HepG2 (cell line): ENCODE measurements at regions of chr5 and their contacts with region 1.

Region 1: DNA sequence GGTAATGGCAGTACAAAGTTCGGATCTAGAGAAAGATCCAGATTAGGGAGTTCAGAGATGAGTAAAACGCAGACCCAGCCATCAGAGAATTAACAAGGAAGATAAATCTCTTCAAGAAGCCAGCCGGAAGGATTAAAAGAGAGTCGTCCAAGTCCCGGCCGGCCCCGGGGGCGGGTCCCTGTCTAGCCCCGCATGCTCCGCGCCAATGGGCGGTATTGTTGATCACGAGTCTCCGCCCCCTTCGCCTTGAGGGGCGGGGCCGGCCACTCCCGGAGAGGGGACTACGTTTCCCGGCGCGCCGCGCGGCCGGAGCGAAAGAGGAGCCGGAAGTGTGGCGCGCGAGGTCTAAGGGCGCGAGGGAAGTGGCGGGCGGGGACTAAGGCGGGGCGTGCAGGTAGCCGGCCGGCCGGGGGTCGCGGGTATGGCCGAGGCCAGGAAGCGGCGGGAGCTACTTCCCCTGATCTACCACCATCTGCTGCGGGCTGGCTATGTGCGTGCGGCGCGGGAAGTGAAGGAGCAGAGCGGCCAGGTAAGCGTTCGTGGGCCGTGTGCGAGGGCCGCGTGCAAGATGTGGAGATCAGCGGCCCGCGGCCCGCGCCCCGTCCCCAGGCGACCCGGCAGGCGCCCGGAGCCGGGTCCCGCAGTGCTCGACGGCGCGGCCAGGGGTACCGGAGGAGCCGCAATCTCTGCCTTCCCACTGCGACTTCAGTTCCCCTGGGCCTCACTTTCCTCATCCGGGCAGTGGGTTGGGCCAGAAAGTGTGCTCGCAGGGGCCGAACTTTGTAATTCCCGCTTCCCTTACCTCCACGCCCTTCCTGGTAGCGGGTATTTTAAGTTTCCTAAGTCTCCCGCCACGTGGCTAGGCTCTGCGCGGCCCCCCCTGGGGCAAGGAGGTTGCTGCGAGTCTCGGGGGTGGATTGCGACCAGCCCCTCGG is at the start of gene TCOF1:
- DNase-seq: peak; percentile 90
- ATAC-seq: peak; percentile 93
- H3K4me3 ChIP-seq: peak within 1 kb of the TSS; percentile 80 to 100 (median 84)
- H3K27ac ChIP-seq: peak within 1 kb of the TSS; percentile 72
- H3K4me1 ChIP-seq: peaks cover 74% of the 10 kb centered on the region
- H3K27me3 ChIP-seq: no peaks in the 10 kb centered on the region; a peak in 1 of 5 replicates
- CTCF ChIP-seq: no peak
- EP300 ChIP-seq: no peak
- POLR2A ChIP-seq: peak in 1 of 2 experiments; percentile 62; a peak in 3 of 4 replicates
- RAD21 ChIP-seq: peak; percentile 14; the same call in 1 of the 2 replicates
- total RNA-seq, gene TCOF1: 41.6 and 44.5 TPM in 2 replicates

Region 2: DNA sequence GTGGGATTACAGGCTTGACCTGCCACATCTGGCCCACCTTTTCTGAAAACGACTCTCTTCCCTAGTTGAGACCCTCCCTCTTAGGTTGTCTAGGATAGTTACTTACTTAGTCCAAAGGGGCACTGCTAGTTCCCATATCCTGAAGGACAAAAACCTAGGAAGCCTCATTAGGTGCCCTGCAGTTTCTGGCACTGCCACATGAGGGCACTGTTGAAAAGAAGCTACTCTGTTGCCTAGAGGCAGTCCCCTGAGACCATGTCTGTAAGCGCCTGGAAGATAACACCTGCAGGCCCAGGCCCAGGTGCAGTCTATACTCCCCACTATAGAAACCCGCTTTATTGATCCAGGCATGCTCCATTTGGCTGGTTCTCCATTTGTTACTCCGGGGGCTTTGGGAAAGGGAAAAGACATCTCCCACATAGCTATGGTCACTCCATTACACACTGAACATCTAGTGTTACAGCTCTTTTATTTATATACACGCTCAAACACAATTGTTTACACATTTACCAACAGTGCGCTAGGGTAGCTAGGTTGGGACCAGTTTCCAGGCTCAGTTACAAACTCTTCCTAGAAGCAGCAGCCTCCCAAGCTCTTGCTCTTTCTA is 700.9 kb before region 1 on chr5:
- CTCF ChIA-PET with region 1: no interaction called
- POLR2A ChIA-PET with region 1: no interaction called
- in situ Hi-C with region 1: no loop called
- intact Hi-C with region 1: loop called (anchors 10 kb)
- DNase-seq: no peak
- ATAC-seq: 0 out of 3 replicates have a peak, but pooled peaks have one; percentile 33
- H3K4me3 ChIP-seq: no peak overlapping the region
- H3K27ac ChIP-seq: no peak overlapping the region
- H3K4me1 ChIP-seq: no peaks in the 10 kb centered on the region
- H3K27me3 ChIP-seq: no peaks in the 10 kb centered on the region
- CTCF ChIP-seq: peak; percentile 68
- EP300 ChIP-seq: no peak
- POLR2A ChIP-seq: no peak
- RAD21 ChIP-seq: no peak

Region 3: DNA sequence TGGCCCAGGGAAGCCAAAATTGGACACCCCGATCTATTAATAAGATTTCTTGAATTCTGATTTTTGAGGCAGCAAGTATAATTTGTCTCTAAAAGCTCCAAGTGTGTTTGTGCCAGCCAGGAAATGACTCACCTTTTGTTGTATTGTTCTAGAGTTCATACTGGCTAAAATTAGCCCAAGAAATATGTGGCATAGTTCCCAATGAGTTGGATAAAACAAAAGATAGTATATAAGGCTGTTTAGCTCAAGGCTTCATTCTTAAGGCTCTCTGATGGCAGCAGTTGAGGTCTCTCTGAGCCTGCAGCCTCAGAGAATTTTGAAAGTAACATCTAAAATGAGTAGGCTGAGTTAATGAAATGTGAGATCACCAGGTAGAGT is 335.4 kb before region 1 on chr5:
- CTCF ChIA-PET with region 1: no interaction called
- POLR2A ChIA-PET with region 1: no interaction called
- in situ Hi-C with region 1: no loop called
- intact Hi-C with region 1: loop called (anchors 10 kb)
- DNase-seq: no peak
- ATAC-seq: no peak
- H3K4me3 ChIP-seq: no peak overlapping the region
- H3K27ac ChIP-seq: peak overlapping the region; percentile 28
- H3K4me1 ChIP-seq: peaks cover 50% of the 10 kb centered on the region
- H3K27me3 ChIP-seq: no peaks in the 10 kb centered on the region
- CTCF ChIP-seq: no peak
- EP300 ChIP-seq: no peak; a peak in 1 of 4 replicates
- POLR2A ChIP-seq: no peak
- RAD21 ChIP-seq: no peak

Region 4: GRCh38 chr5:150372639-150373038 is 15.0 kb after region 1 on chr5:
- CTCF ChIA-PET with region 1: no interaction called
- POLR2A ChIA-PET with region 1: no interaction called
- in situ Hi-C with region 1: no loop called
- intact Hi-C with region 1: no loop called
- DNase-seq: no peak
- ATAC-seq: no peak
- H3K4me3 ChIP-seq: no peak overlapping the region
- H3K27ac ChIP-seq: no peak overlapping the region
- H3K4me1 ChIP-seq: no peaks in the 10 kb centered on the region
- H3K27me3 ChIP-seq: no peaks in the 10 kb centered on the region
- CTCF ChIP-seq: no peak
- EP300 ChIP-seq: no peak
- POLR2A ChIP-seq: no peak
- RAD21 ChIP-seq: no peak